Psoas muscle (tissue), 8 donors: ENCODE measurements at regions of chr1 and their contacts with region 1.

Region 1: DNA sequence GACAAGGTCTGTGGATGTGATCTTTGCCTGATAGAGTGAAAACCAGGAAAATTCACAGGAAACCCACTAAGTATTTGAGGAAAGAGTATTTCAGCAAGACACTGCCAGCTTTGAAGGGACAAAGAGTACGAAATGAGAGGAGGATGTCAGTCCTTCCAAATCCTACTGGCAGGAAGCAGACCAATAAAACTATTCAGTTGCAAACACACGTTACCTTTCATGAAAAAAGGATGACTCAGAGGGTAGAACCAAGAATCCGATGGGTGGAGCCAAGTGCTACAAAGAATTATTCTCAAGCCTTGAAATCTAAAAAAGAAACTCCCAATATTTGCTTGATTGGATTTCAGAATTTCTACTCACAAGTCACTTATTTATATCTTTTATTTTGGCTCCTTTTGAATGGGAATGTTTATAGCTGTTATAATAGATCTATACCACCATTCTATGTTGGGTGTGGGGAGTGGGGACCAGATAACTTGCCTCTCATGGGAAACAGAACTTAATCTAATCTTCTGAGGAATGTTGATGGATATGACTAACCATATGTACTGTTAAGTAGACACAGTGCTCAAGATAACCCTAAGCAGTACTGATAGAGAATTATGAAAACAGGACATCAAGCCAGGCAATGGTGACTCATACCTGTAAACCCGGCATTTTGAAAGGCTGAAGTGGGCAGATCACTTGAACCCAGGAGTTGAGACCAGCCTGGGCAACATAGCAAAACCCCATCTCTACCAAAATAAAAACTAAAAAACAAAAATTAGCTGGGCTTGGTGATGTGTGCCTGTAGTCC is 19.3 kb upstream of the HEATR1 start:
- DNase-seq: no peak
- ATAC-seq: peak in 3 of 4 donors; percentile 25 to 53 (median 53)
- H3K4me3 ChIP-seq: no peak overlapping the region
- H3K27ac ChIP-seq: peak overlapping the region; percentile 75
- H3K4me1 ChIP-seq: peaks cover 22% of the 10 kb centered on the region
- H3K27me3 ChIP-seq: no peaks in the 10 kb centered on the region
- CTCF ChIP-seq: no peak

Region 2: GRCh38 chr1:236654957-236655356 is 31.4 kb after region 1 on chr1:
- intact Hi-C with region 1: loop called in 1 of 2 experiments (anchors 5 kb)
- DNase-seq: no peak
- ATAC-seq: no peak
- H3K4me3 ChIP-seq: no peak overlapping the region
- H3K27ac ChIP-seq: no peak overlapping the region
- H3K4me1 ChIP-seq: peaks cover 10% of the 10 kb centered on the region
- H3K27me3 ChIP-seq: no peaks in the 10 kb centered on the region
- CTCF ChIP-seq: no peak

Region 3: DNA sequence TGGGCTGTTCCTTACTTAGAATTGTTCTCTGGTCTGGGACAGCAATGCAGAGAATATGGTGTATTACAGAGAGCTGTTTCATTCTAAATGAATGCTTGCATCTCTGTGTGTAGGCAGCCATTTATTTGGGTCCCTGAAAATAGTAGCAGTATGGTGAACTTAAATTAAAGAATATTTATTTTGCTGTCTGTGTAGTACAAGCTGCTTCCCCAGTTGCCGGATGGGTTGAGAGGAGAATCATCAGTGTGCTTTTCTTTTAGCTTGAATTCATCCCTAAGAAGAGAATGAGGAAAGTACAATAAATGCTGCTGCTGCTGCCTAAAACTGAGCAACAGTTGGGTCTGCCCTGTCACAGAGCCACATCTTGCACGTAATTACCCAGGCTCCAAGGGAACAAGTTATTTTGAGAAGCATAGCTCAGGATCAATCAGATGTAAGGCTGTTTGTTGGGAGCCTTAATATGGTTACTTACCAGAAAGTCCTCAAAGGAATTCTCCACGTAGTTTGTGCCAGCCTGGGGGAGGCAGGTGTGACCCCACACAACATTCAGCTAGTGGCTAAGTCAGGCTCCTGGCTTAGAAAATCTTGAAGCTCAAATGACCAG is 79.3 kb after region 1 on chr1:
- intact Hi-C with region 1: loop called in 1 of 2 experiments (anchors 5 kb)
- DNase-seq: no peak
- ATAC-seq: peak; percentile 10 to 53 (median 44)
- H3K4me3 ChIP-seq: peak overlapping the region; percentile 37
- H3K27ac ChIP-seq: peak overlapping the region; percentile 99
- H3K4me1 ChIP-seq: peaks cover 79% of the 10 kb centered on the region
- H3K27me3 ChIP-seq: no peaks in the 10 kb centered on the region
- CTCF ChIP-seq: no peak